Ascending aorta (tissue), 2 donors: ENCODE measurements at regions of chr2 and their contacts with region 1.

Region 1: GRCh38 chr2:73176881-73177644 is 25.3 kb upstream of the NOTO start:
- DNase-seq: peak; percentile 51 to 96
- H3K4me3 ChIP-seq: peak overlapping the region; percentile 46 to 83
- H3K27ac ChIP-seq: peak overlapping the region; percentile 59 to 85
- H3K4me1 ChIP-seq: peaks cover 9 to 19% of the 10 kb centered on the region in 2 donors
- H3K27me3 ChIP-seq: no peaks in the 10 kb centered on the region
- CTCF ChIP-seq: peak; percentile 98 to 99 (median 99)

Region 2: GRCh38 chr2:72887754-72888437 is 289.2 kb before region 1 on chr2:
- intact Hi-C with region 1: loop called (anchors 1 kb)
- DNase-seq: peak; percentile 50 to 94
- H3K4me3 ChIP-seq: peak overlapping the region; percentile 81 to 89
- H3K27ac ChIP-seq: peak overlapping the region; percentile 84 to 89
- H3K4me1 ChIP-seq: peaks cover 5 to 16% of the 10 kb centered on the region in 2 donors
- H3K27me3 ChIP-seq: no peaks in the 10 kb centered on the region
- CTCF ChIP-seq: peak; percentile 78 to 96 (median 95)

Region 3: DNA sequence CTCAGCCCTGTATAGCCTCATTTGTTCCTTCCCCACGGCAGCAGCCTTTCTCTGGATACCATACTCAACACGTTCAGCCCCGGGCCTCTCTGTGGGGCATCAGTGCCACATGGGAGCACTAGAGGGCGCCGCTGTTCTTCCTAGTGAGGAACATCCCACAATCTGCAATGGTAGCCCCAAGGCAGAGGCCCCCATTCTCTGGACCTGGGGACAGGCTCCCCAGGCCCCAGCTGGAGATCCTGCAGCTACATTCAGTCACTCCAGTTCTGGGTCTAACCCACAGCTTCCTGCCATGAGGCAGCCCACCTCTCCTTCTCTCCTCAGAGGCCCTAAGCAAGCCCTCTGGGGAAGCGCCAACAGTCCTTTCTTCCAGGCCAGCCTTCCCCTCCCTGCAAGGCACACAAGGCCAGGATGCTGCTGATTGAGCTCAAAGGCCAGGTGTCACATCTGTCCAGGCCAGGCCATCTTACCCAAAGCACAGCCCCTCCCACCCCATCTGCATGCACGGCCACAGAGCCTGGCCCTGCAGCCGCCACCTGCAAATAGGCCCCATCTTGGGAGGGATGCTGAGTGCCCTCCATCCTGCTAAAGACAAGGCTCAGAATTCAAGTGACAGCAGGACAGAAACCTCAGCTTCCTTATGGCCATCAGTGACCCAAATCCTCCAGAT is 91.2 kb before region 1 on chr2:
- intact Hi-C with region 1: loop called (anchors 1 kb)
- DNase-seq: peak; percentile 44 to 91
- H3K4me3 ChIP-seq: peak overlapping the region in 1 of 2 donors; percentile 60
- H3K27ac ChIP-seq: no peak overlapping the region
- H3K4me1 ChIP-seq: peaks cover 19 to 58% of the 10 kb centered on the region in 2 donors
- H3K27me3 ChIP-seq: no peaks in the 10 kb centered on the region
- CTCF ChIP-seq: peak; percentile 85 to 97 (median 92)

Region 4: DNA sequence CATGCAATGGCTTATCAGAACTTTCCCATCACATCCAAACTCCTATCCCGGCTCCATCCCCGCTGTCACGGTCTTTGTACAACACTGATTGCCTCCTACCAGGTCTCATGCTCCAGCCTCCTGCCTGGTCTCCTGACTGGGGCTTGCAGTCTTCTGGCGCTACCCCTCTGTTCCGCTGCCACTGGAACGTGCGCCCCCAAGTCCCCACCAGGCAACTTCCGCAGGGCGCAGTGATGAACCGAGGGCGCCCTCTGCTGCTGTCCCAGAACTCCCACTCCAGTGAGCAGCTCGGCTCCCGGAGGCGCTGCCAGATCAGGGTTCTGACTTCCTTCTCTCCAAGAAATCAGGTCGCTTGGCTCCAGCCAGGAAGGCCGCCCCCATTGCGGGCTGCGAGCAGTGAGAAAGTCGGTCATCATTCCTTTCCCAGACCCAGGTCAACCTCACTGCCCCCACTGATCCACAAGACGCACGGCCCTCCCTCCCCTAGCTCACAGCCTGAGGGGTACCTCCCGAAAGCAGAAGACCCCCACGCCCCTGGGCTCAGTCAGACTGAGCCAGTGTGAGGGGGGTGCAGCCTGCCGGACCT is 20.4 kb before region 1 on chr2:
- intact Hi-C with region 1: loop called (anchors 2 kb)
- DNase-seq: peak in 1 of 2 donors; percentile 79
- H3K4me3 ChIP-seq: peak overlapping the region in 1 of 2 donors; percentile 5
- H3K27ac ChIP-seq: no peak overlapping the region
- H3K4me1 ChIP-seq: peaks cover 0 to 6% of the 10 kb centered on the region in 2 donors
- H3K27me3 ChIP-seq: no peaks in the 10 kb centered on the region
- CTCF ChIP-seq: peak; percentile 78 to 91 (median 80)